ENCODE measurements at regions of chr2 and their contacts with region 1.

Region 1: DNA sequence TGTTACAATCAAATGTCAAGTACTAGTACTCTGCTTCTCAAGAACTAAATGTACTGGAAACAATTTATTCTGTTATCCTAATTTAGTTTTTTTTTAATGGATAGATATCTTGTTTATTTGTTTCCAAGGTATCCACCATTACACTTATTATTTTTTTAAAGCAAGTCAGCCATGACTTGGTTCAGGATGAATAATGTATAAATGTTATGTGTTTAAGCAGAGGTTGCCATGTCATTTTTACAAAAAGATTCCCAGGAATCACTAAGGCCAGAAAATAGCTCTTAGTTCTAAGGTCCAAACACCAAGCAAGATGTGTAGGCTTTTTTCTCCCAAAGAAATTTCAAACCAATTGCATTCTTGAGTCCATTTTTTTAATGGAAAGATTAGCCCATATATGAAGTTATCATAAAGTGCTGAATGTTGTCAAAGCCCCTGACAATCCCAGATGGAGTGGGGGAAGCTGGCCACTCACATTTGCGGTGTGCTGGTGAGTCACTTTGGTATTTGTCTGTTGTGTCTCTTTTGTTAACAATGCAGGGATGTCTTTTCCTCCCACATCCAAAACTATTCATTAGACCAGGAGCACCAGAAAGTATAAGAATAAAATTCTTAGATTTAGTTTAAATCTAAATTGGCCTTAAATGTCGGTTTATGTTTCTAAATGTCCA is 158.9 kb downstream of the COL6A3 start:
- DNase-seq: peak; percentile 63
- ATAC-seq: peak; percentile 11; the same call in 1 of the 2 replicates
- H3K4me3 ChIP-seq: no peak overlapping the region
- H3K27ac ChIP-seq: peak overlapping the region; percentile 88
- H3K4me1 ChIP-seq: peaks cover 52% of the 10 kb centered on the region
- H3K27me3 ChIP-seq: no peaks in the 10 kb centered on the region
- CTCF ChIP-seq: no peak

Region 2: GRCh38 chr2:237178396-237178795 is 76.6 kb before region 1 on chr2:
- CTCF ChIA-PET with region 1: no interaction called
- POLR2A ChIA-PET with region 1: no interaction called
- intact Hi-C with region 1: loop called (anchors 2 kb)
- DNase-seq: peak; percentile 94
- ATAC-seq: peak; percentile 98
- H3K4me3 ChIP-seq: no peak overlapping the region
- H3K27ac ChIP-seq: peak overlapping the region; percentile 67
- H3K4me1 ChIP-seq: peaks cover 30% of the 10 kb centered on the region
- H3K27me3 ChIP-seq: no peaks in the 10 kb centered on the region
- CTCF ChIP-seq: no peak

Region 3: DNA sequence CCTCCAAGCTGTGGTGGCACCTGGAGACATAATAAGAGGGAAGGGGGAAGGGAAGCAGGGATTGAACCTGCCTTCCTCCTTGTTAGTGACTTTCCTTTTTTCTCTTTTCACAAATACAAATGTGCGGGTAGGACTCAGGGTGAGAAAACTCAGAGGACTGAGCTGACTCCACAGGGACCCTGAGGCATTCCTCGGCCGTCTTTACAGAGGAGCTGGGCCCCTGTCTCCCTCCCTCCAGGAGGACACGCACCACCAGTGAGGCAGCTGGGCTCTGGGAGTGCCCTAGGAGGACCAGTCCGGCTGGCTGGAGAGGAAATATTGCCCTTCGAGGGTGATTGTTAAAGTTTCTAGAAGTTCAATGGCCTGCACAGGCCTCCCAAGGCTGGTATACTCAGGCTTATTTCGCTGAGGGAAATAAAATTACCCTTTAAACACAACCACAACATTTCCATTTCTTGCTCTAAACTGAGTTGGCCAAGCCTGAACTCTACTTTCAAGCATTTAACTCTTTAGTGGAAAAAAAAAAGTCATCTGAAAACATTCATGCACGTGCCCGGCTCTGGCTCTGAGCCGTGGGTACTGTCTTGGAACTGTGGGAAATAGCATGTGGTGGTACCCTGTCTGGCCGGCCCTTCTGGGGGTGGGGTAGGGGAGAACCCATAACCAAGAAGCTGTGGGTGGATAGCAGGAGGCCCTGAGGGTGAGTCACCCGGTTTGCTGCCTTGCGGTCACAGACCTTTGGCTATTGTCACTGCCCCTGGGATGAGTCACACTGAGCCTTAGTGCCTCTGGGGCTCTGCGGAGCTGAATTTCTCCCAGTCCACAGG is 53.4 kb before region 1 on chr2:
- CTCF ChIA-PET with region 1: no interaction called
- POLR2A ChIA-PET with region 1: no interaction called
- intact Hi-C with region 1: loop called (anchors 1 kb)
- DNase-seq: peak; percentile 96
- ATAC-seq: peak; percentile 89
- H3K4me3 ChIP-seq: peak overlapping the region; percentile 40; the same call in 1 of the 2 replicates
- H3K27ac ChIP-seq: peak overlapping the region; percentile 71
- H3K4me1 ChIP-seq: peaks cover 55% of the 10 kb centered on the region
- H3K27me3 ChIP-seq: no peaks in the 10 kb centered on the region
- CTCF ChIP-seq: no peak

Region 4: GRCh38 chr2:237291138-237291792 is 36.2 kb after region 1 on chr2:
- CTCF ChIA-PET with region 1: no interaction called
- POLR2A ChIA-PET with region 1: interaction called, 3 read pairs
- intact Hi-C with region 1: loop called (anchors 1 kb)
- DNase-seq: peak; percentile 98
- ATAC-seq: peak; percentile 82
- H3K4me3 ChIP-seq: peak overlapping the region; percentile 48
- H3K27ac ChIP-seq: peak overlapping the region; percentile 66
- H3K4me1 ChIP-seq: peaks cover 22% of the 10 kb centered on the region
- H3K27me3 ChIP-seq: no peaks in the 10 kb centered on the region
- CTCF ChIP-seq: no peak

Region 5: GRCh38 chr2:237322564-237322963 is 67.5 kb after region 1 on chr2:
- CTCF ChIA-PET with region 1: no interaction called
- POLR2A ChIA-PET with region 1: no interaction called
- intact Hi-C with region 1: loop called (anchors 5 kb)
- DNase-seq: peak; percentile 63
- ATAC-seq: peak; percentile 96
- H3K4me3 ChIP-seq: no peak overlapping the region
- H3K27ac ChIP-seq: no peak overlapping the region
- H3K4me1 ChIP-seq: no peaks in the 10 kb centered on the region
- H3K27me3 ChIP-seq: no peaks in the 10 kb centered on the region
- CTCF ChIP-seq: peak; percentile 85

Measured in PC-3 (cell line).